ENCODE measurements at regions of chr20 and their contacts with region 1.

Region 1: DNA sequence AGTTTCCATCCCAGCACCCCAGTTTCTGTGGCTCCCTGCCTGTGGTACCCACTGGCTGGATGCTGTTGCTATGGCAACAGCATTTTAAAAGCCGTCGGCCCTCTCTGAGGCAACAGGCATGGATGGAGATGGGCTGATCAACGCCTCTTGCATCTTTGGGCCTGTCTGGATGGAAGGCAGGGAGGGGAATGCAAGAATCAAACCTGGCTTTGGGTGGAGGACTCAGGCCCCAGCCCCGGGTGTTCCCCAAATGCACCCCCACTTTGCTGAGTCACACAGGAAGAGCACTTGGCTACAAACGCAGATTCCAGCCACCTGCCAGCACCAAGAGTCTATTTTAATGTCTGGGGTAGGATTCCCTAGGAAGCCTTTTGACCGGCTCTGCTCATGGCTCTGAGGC is 45.7 kb upstream of the TGM2 start:
- DNase-seq: no peak

Region 2: GRCh38 chr20:36481381-36482043 is 1729.2 kb before region 1 on chr20:
- intact Hi-C with region 1: loop called in 1 of 2 experiments (anchors 5 kb)
- DNase-seq: no peak

Region 3: GRCh38 chr20:37777012-37777950 is 433.5 kb before region 1 on chr20:
- intact Hi-C with region 1: no loop called
- DNase-seq: no peak

Region 4: GRCh38 chr20:38180781-38181180 is 30.0 kb before region 1 on chr20:
- intact Hi-C with region 1: loop called in 1 of 2 experiments (anchors 1 kb)
- DNase-seq: no peak

Measured in posterior vena cava (tissue), 2 donors.